ENCODE measurements at regions of chr17 and their contacts with region 1.

Region 1: DNA sequence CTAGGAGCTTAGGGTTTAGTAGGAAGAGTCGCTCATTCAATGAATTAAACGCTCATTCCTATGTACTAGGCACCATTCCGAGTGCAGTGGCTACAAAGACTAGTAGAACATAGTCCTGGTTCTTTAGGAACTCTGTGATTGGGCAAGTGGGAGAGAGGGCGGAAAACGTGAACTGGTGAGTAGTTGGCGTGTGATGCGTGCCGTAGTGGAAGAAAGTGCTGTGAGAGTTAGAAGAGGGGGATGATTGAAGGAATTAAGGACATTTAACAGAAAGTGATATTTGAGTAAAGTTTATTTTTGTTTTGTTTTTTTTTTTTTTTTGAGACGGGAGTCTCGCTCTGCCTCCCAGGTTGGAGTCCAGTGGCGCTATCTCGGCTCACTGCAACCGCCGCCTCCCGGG is 7.9 kb upstream of the SLFN14 start:
- DNase-seq: peak; percentile 26

Region 2: DNA sequence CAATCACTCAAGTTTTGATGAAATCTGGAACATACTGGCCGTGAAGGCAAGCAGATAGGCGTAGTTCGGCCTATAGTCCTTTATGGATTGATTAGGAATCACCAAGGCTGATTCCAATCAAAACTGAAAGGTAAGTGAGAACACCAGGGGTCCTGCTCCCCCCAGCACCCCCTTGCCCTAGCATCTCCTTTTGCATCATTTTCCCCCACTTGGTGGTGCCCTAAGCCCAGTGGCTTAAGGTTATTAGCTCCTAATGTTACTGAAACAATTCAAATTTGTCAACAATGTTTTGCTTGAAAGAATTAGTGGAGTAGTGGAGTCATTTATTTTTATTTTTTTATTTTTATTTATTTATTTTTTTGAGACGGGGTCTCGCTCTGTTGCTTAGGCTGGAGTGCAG is 12.8 kb before region 1 on chr17:
- CTCF ChIA-PET with region 1: no interaction called
- POLR2A ChIA-PET with region 1: interaction called, 10 read pairs
- DNase-seq: no peak

Region 3: DNA sequence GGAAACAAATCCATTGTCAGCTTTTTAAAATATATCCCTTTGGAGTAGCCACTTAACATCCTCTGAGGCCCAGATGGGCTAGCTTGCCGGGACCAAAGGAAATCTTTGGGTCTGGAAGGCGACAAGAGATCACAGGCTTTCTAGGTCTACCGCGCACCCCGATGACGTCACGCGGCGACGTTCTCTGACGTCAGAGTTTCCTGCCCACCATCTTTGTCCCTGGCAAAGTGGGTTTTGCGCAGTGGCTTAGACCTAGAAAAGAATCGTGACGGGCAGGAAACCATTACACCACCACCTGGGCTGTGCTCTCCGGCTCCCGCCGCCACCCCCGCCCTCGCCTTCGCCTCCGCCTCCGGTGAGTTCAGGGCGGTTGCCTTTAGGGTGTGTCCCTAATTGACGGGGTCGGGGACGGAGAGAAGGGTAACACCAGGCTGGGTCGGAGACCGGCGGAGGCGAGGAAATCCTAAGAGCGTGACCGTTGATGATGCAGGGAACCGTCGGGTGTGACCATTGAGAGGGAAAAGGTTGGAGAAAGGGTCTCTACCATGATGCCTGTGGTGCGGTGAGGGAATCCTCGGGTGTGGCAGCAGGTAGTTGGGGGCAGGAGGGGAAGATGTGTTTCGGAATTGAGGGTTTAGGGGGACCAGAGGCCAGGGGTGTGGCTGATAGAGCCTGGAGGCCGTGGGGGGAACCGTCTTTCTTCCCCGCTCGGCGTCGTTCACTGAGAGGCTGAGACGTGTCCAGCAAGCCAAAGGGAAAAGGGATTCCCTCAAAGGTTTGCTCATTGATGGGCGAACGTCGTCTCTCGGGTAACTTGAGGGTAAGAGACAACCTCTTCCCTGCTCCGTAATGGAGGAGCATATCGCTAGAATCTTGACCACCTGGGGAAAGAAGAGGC is 18.8 kb after region 1 on chr17 and contains the start of gene AP2B1:
- CTCF ChIA-PET with region 1: no interaction called
- POLR2A ChIA-PET with region 1: interaction called, 16 read pairs
- DNase-seq: peak; percentile 74